ENCODE measurements at regions of chr2 and their contacts with region 1.

Region 1: DNA sequence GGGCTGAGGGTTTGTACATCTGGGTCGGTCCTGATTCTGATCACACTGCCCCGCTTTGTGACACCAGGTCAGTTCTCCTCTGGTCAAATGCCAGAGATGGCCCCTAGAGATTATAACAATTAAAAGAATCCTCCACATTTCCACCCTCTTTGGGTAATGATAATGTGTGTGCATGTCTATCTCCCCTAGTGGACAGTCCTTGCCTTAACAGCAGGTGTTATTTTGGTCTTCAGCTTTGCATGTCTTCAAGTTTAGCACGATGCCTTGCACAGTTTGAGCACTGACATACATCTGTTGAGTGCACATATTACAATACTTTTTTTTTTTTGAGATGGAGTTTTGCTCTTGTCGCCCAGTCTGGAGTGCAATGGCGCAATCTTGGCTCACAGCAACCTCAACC is 25.7 kb upstream of the COX7A2L start:
- DNase-seq: no peak
- H3K4me3 ChIP-seq: no peak overlapping the region
- H3K27ac ChIP-seq: no peak overlapping the region
- H3K4me1 ChIP-seq: peaks cover 0 to 3% (median 0%) of the 10 kb centered on the region in 4 experiments; a peak in 2 of 7 replicates
- H3K27me3 ChIP-seq: no peaks in the 10 kb centered on the region
- CTCF ChIP-seq: peak in 1 of 3 experiments; percentile 56; a peak in 1 of 4 replicates
- EP300 ChIP-seq: no peak
- POLR2A ChIP-seq: no peak
- RAD21 ChIP-seq: peak in 1 of 2 experiments; percentile 19; a peak in 2 of 4 replicates

Region 2: GRCh38 chr2:42367835-42368234 is 18.8 kb before region 1 on chr2:
- CTCF ChIA-PET with region 1: interaction called, 12 read pairs
- POLR2A ChIA-PET with region 1: no interaction called
- DNase-seq: no peak
- H3K4me3 ChIP-seq: no peak overlapping the region
- H3K27ac ChIP-seq: no peak overlapping the region
- H3K4me1 ChIP-seq: no peaks in the 10 kb centered on the region
- H3K27me3 ChIP-seq: no peaks in the 10 kb centered on the region
- CTCF ChIP-seq: no peak
- EP300 ChIP-seq: no peak
- POLR2A ChIP-seq: no peak
- RAD21 ChIP-seq: no peak

Region 3: DNA sequence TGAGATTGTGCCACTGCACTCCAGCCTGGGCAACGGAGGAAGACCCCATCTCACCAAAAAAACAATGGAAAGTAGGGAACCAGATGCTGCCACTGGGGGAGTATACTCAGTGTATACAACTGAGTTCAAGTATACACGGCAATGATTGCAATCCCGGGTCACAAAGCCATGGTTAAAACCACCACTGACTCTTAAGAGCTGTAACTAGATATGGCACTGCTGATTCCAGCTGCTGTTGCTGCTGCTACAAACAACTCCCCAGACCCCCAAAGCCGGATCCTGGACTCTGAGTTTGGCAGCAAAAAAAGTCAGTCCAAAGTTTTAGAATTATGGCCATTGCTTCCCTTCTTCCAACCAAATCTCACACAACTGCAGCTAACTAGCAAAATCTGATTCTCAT is 18.0 kb after region 1 on chr2:
- CTCF ChIA-PET with region 1: interaction called, 10 read pairs
- POLR2A ChIA-PET with region 1: interaction called, 7 read pairs
- DNase-seq: no peak
- H3K4me3 ChIP-seq: no peak overlapping the region
- H3K27ac ChIP-seq: no peak overlapping the region
- H3K4me1 ChIP-seq: no peaks in the 10 kb centered on the region
- H3K27me3 ChIP-seq: no peaks in the 10 kb centered on the region
- CTCF ChIP-seq: no peak
- EP300 ChIP-seq: no peak
- POLR2A ChIP-seq: no peak
- RAD21 ChIP-seq: no peak